ENCODE measurements at regions of chr17 and their contacts with region 1.

Region 1: DNA sequence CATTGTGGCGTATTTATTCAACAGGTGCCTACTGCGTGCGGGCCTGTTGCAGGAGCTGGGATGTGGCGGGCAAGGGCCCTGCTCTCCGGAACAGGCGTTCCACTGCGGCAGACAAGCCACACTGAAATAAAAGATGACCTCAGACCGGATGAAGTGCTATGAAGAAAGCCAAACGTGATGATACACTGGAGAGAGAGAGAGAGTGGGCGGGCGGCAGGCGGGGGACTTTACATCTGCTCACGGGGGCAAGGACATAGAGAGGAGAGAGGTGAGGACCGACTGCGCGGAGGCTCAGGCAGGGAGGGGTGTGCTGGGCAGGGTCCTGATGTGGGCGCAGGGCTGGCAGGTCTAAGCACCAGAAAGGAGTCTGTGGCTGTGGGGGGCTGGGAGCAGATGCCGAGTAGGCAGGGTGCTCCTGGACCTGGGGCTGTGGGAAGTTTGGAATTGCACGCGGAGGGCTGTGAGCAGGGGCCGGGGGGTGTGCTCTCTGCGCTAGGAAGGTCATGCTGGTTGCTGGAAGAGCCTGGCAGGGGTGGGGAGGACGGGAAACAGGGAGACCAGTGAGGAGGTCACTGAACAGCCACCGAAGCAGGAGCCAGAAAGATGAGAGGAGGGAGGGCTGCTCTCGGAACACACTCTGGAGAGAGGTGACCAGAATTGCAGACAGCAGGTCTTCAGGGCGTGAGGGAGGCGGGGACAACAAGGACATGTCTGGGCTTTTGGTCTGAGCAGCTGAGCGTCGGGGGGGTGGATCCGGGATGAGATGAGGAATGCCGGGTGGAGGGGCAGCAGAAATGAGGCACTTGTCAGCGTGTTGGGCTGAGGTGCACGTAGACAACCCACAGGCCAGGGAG is 9.9 kb downstream of the MXRA7 start:
- DNase-seq: no peak

Region 2: DNA sequence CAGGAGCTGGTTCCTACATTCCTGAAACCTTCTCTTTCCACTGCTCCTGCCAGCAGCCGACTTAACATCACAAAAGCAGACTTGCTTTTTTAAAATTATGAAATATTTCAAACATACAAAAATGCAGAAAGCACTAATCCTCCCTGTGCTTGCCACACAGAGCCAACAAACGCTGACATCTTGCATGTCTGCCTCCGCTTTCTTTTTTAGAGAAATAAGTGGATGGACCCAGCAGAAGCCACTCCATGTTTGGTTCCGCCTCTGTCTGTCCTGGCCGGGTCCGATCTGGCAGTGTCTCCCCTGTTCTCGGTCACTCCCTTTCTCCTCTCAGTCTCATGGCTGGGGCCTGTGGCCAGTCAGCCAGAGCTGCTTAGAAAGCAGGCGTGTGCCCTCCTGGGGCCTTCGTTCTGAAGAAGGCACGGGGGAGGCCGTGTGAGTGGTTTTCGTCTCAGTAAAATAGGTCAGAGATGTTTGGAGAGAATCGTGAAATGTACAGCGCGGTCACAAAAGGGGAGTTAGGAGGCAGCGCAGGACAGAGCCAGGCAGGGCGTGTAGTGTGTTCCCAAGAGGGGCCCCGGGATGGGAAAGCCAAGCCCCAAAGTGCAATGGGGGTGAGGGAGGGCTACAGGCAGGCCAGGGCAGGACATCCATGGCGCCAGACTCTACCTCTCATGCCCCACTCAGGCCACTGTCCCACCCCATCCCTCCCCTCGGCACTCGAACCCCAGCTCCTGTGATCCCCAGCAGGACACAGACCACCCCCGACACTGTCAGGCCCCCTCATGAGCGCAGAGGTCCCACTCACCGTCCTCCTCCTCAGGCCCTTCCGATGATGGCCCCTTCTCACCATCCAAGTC is 13.3 kb before region 1 on chr17:
- CTCF ChIA-PET with region 1: interaction called, 4 read pairs
- POLR2A ChIA-PET with region 1: interaction called, 14 read pairs
- DNase-seq: no peak

Measured in HEK293T (cell line).